Sigmoid colon (tissue), 7 donors: ENCODE measurements at regions of chr18 and their contacts with region 1.

Region 1: DNA sequence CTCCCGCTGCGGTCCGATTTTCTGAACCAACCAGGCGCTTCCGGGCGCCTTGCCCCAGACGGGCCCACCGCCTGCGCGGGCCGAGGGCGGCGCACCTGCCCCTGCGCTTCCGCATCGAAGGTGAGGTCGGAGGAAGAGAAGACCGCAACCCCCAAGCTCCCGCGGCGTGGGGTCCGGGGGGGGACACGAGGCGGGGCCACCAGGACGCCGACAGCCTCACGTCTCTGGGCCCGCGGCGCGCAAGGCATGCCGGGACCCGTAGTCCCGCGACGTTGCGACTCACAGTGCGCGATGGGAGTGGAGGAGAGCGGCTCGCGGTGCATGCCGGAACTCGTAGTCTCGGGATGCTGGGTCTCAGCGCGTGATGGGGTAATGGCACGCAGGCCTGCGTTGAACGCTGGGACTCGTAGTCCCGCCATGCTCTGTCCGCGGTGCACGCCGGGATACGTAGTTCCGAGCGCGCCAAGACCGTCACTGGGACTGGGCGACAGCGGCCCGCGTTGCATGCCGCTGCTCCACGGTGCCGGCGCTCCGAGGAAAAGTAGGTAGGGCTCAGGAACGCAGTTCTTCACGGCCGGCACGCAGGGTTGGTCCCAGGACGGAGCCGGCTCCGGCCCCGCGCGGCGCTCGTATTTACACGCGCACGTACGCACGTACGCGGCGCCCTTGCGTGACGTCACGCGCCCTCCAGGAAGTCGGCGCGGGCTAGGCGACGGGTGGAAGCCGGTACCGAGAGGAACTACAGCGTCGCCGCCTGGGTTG is at the start of gene CTDP1:
- DNase-seq: peak; percentile 99
- H3K4me3 ChIP-seq: peak within 1 kb of the TSS; percentile 84 to 95 (median 92)
- H3K27ac ChIP-seq: peak within 1 kb of the TSS; percentile 89 to 99 (median 96)
- H3K4me1 ChIP-seq: peaks cover 0 to 47% (median 37%) of the 10 kb centered on the region in 4 donors
- H3K27me3 ChIP-seq: no peaks in the 10 kb centered on the region
- CTCF ChIP-seq: no peak
- EP300 ChIP-seq: peak in 1 of 4 donors; percentile 61
- POLR2A ChIP-seq: peak; percentile 34 to 36
- total RNA-seq, gene CTDP1: 11.1 to 14.7 (median 12.6) TPM

Region 2: GRCh38 chr18:79068937-79069791 is 610.1 kb before region 1 on chr18 and contains the start of gene ATP9B:
- intact Hi-C with region 1: loop called (anchors 2 kb)
- DNase-seq: peak; percentile 99
- H3K4me3 ChIP-seq: peak within 1 kb of the TSS; percentile 91 to 100 (median 98)
- H3K27ac ChIP-seq: peak within 1 kb of the TSS; percentile 95 to 97 (median 96)
- H3K4me1 ChIP-seq: peaks cover 0 to 20% (median 13%) of the 10 kb centered on the region in 4 donors
- H3K27me3 ChIP-seq: no peaks in the 10 kb centered on the region
- CTCF ChIP-seq: no peak
- EP300 ChIP-seq: peak in 2 of 4 donors; percentile 3 to 89
- POLR2A ChIP-seq: no peak
- total RNA-seq, gene ATP9B: 28.1 to 66.5 (median 36.0) TPM

Region 3: GRCh38 chr18:79400091-79400590 is 279.2 kb before region 1 on chr18:
- intact Hi-C with region 1: loop called (anchors 1 kb)
- DNase-seq: peak; percentile 85
- H3K4me3 ChIP-seq: peak overlapping the region; percentile 53 to 98 (median 93)
- H3K27ac ChIP-seq: peak overlapping the region; percentile 86 to 91 (median 86)
- H3K4me1 ChIP-seq: peaks cover 0 to 70% (median 62%) of the 10 kb centered on the region in 4 donors
- H3K27me3 ChIP-seq: no peaks in the 10 kb centered on the region
- CTCF ChIP-seq: no peak
- EP300 ChIP-seq: no peak
- POLR2A ChIP-seq: no peak

Region 4: DNA sequence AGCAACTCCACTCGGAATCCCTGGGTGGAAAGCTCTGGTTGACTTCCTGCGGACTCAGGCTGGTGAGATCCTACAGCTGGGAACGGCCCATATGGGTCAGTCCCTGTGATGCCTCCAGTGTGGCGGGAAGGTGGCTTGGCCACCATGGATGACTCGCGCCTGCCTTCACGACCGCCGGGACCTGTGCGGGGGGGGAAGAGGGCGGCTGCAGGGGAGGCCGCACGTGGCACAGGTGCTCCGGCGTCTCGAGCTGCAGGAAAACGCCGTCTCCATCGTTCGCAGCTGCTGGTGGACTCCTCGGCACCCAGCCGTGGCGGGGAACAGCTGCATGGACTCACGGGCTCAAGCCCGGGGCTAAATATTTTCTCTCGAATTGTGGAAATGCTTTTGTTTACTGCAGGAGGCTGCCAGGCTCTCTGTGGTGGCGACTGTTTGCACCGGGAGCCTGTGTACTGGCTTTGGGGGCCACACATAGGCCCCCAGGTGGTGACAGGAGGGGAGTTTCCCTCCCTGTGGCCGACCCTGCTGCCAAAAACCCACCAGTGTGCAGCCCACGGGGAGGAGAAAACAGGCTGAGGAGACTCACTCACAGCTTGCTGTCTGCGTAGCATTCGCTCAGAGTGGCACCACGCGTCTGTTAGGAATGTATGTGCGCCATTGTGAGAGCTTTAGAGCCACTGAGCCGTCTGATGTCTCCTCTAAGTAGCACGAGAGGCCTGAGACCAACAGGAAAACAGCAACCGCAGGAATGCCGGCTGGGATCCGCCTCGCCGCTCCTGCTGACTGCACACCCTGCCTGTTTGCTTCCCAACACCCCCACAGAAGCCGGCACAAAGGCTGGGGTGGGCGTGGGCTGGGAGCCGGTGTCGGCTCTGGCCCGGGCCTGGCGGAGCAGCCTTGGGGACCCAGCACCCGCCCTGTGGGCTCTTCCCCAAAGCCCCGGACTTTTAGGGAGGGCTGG is 194.4 kb before region 1 on chr18:
- intact Hi-C with region 1: no loop called
- DNase-seq: peak; percentile 71
- H3K4me3 ChIP-seq: peak overlapping the region in 3 of 4 donors; percentile 5 to 20 (median 8)
- H3K27ac ChIP-seq: peak overlapping the region in 3 of 4 donors; percentile 71 to 74 (median 73)
- H3K4me1 ChIP-seq: peaks cover 0 to 27% (median 25%) of the 10 kb centered on the region in 4 donors
- H3K27me3 ChIP-seq: no peaks in the 10 kb centered on the region
- CTCF ChIP-seq: no peak
- EP300 ChIP-seq: no peak
- POLR2A ChIP-seq: no peak

Region 5: GRCh38 chr18:80108728-80109675 is 429.7 kb after region 1 on chr18 and contains the start of gene ADNP2:
- intact Hi-C with region 1: loop called (anchors 10 kb)
- DNase-seq: peak; percentile 92
- H3K4me3 ChIP-seq: peak within 1 kb of the TSS; percentile 39 to 90 (median 75)
- H3K27ac ChIP-seq: peak within 1 kb of the TSS; percentile 83 to 94 (median 92)
- H3K4me1 ChIP-seq: peaks cover 0 to 24% (median 13%) of the 10 kb centered on the region in 4 donors
- H3K27me3 ChIP-seq: no peaks in the 10 kb centered on the region
- CTCF ChIP-seq: no peak
- EP300 ChIP-seq: no peak
- POLR2A ChIP-seq: no peak
- total RNA-seq, gene ADNP2: 13.0 to 18.0 (median 13.3) TPM